A549 (cell line): ENCODE measurements at regions of chr15 and their contacts with region 1.

Region 1: GRCh38 chr15:63402498-63403253 is 21.0 kb upstream of the CA12 start:
- DNase-seq: peak; percentile 55 to 57
- ATAC-seq: peak; percentile 79 to 88
- H3K4me3 ChIP-seq: no peak overlapping the region
- H3K27ac ChIP-seq: peak overlapping the region; percentile 36 to 70; a peak in 5 of 6 replicates
- H3K4me1 ChIP-seq: peaks cover 19% of the 10 kb centered on the region; the same call in 2 of the 3 replicates
- CTCF ChIP-seq: peak; percentile 94
- EP300 ChIP-seq: no peak
- POLR2A ChIP-seq: no peak
- RAD21 ChIP-seq: peak; percentile 94 to 97

Region 2: DNA sequence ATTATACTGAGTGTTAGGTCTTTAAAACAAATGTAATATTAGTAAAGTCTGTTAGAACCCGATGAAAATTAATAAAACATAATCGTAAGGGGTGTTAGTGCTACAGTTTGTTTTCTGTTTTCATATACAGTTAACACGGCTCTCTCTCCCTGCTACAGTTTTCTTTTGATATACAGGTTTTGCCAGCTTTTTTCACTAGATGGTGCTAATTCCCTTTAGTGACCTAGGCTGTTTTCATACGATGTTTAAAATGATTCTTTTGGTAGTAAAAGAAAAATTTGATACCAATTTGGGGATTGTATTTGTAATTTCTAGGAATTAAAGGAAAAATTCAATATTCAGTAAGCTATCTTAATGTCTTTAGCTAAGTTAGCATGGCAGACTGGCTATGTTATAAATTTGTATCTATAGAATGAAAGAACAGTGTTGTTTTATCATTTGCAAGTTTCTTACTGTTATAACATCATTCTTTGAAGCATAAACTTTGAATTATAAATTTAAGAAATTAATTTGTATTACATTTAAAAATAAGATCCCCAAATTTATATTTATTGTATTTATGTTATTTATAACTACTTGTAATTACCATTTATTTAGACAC is 113.8 kb before region 1 on chr15:
- CTCF ChIA-PET with region 1: interaction called, 163 read pairs
- POLR2A ChIA-PET with region 1: no interaction called
- DNase-seq: peak; percentile 63 to 86
- ATAC-seq: peak; percentile 74 to 88; a peak in 5 of 6 replicates
- H3K4me3 ChIP-seq: no peak overlapping the region
- H3K27ac ChIP-seq: peak overlapping the region in 1 of 2 experiments; percentile 22; a peak in 2 of 6 replicates
- H3K4me1 ChIP-seq: peaks cover 9% of the 10 kb centered on the region; the same call in 2 of the 3 replicates
- CTCF ChIP-seq: peak; percentile 98
- EP300 ChIP-seq: no peak
- POLR2A ChIP-seq: no peak
- RAD21 ChIP-seq: peak; percentile 97 to 98

Region 3: GRCh38 chr15:63327648-63328421 is 74.8 kb before region 1 on chr15:
- CTCF ChIA-PET with region 1: interaction called, 12 read pairs
- POLR2A ChIA-PET with region 1: no interaction called
- DNase-seq: no peak
- ATAC-seq: no peak
- H3K4me3 ChIP-seq: no peak overlapping the region
- H3K27ac ChIP-seq: no peak overlapping the region
- H3K4me1 ChIP-seq: peaks cover 8% of the 10 kb centered on the region
- CTCF ChIP-seq: no peak
- EP300 ChIP-seq: no peak
- POLR2A ChIP-seq: no peak
- RAD21 ChIP-seq: no peak

Region 4: DNA sequence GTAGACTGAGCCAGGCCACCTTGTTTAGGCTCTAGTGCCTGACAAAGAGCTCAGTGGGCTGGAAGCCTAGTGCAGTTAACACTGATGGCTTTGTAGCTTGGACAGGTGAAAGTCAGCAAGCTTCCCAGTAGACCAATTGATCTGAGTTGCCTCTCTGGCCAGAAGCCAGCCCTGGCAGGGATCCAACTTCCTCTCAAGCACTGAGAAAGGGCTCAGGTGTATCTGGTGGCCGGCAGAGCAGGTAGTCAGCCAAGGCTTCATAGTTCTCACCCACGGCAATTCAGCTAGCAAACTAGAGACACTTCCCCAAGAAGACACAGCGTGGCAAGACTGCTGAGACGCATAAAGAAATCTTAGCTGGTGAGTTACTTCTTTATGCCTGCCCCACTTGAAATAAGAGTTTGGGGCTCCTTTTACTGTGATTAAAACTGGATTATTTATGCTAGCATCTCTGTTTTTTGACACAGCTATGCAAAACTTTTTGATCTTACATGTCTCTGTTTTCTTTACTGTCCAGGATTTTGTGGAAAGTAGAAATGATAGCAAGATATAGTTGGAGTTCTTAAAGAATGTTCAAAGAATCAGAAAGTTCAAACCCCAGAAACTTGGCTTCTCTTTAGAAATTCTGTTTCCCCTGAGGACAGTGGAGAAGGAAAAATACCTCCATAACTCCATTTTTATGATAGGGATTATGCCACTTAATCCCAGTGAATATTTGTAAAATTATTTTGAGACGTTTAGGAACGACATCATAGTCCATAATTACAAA is 12.6 kb before region 1 on chr15:
- CTCF ChIA-PET with region 1: interaction called, 20 read pairs
- POLR2A ChIA-PET with region 1: no interaction called
- DNase-seq: no peak
- ATAC-seq: no peak
- H3K4me3 ChIP-seq: no peak overlapping the region
- H3K27ac ChIP-seq: no peak overlapping the region
- H3K4me1 ChIP-seq: no peaks in the 10 kb centered on the region
- CTCF ChIP-seq: no peak
- EP300 ChIP-seq: no peak
- POLR2A ChIP-seq: no peak
- RAD21 ChIP-seq: no peak

Region 5: DNA sequence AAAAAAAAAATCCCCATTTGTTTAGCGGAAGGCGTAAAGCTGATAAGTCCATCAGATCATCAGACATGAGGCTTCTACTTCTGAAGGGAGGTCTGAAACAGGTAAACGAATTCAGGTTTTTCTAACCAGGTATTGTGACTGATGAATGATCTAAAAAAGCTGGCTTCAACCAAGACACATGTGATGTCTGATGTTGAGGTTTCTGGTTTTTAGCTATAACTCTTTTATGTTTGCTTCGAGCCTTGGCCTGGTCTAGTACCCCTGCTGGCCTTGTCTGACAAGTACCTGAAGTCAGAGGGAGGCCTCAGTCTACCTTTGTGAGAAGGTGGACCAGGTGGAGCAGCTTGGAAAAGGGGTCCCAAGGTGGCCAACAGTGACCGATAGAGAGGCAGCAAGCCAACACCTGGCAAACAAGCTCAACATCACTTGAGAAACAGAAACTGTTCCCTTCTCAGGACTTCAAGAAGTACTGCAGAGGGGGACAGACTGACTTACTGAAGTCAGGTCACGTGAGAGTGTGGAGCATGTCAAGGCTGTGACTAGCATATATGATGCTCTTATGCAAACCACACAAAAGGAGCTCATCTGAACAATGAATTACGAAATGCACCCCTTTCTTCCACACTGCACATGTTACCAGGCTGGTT is 11.9 kb after region 1 on chr15:
- CTCF ChIA-PET with region 1: interaction called, 25 read pairs
- POLR2A ChIA-PET with region 1: no interaction called
- DNase-seq: no peak
- ATAC-seq: no peak
- H3K4me3 ChIP-seq: no peak overlapping the region
- H3K27ac ChIP-seq: no peak overlapping the region
- H3K4me1 ChIP-seq: no peaks in the 10 kb centered on the region
- CTCF ChIP-seq: no peak
- EP300 ChIP-seq: no peak
- POLR2A ChIP-seq: no peak
- RAD21 ChIP-seq: no peak

Region 6: GRCh38 chr15:63473999-63474809 is 71.5 kb after region 1 on chr15:
- CTCF ChIA-PET with region 1: no interaction called
- POLR2A ChIA-PET with region 1: no interaction called
- DNase-seq: peak in 1 of 2 experiments; percentile 95
- ATAC-seq: peak; percentile 82
- H3K4me3 ChIP-seq: no peak overlapping the region
- H3K27ac ChIP-seq: peak overlapping the region; percentile 81 to 90
- H3K4me1 ChIP-seq: peaks cover 59% of the 10 kb centered on the region
- CTCF ChIP-seq: no peak
- EP300 ChIP-seq: peak; percentile 24 to 45; a peak in 3 of 5 replicates
- POLR2A ChIP-seq: no peak
- RAD21 ChIP-seq: peak; percentile 25 to 43; a peak in 2 of 5 replicates

Region 7: DNA sequence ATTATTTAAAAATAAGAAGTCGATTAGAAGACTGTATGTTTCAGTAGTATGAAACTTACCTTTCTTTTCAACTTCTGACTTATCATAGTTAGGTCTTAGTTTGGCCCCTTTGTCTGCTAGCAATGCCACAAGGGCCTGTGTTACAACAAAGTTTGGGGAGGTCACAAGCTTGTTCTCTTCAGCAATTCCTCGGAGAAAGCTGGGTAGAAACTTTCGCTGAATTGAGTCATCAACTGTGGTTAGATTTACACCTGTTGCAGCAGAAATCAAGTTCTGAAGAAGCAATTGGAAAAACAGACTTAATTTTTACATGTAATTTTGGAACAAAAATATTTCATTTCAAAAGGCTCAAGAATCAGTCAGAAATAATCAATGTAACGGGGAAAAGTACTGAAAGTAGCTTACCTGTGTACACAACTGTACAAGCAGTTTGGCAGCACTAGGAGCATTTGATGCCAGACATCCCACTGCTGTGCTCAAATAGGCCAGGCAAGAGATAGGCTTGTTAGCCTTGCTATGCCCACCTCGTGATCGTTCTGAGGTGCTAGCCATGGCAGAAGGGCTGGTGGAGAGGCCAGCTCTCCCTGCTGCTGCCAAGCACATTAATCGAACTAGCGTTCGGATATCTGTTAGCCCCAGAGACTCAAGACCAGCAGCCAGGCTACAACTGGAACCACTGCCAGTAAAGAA is 253.2 kb after region 1 on chr15:
- CTCF ChIA-PET with region 1: no interaction called
- POLR2A ChIA-PET with region 1: no interaction called
- DNase-seq: no peak
- ATAC-seq: no peak
- H3K4me3 ChIP-seq: no peak overlapping the region
- H3K27ac ChIP-seq: no peak overlapping the region
- H3K4me1 ChIP-seq: no peaks in the 10 kb centered on the region
- CTCF ChIP-seq: no peak
- EP300 ChIP-seq: no peak
- POLR2A ChIP-seq: no peak
- RAD21 ChIP-seq: no peak